CD8-positive, alpha-beta T cell (primary cell): ENCODE measurements at regions of chr6 and their contacts with region 1.

Region 1: DNA sequence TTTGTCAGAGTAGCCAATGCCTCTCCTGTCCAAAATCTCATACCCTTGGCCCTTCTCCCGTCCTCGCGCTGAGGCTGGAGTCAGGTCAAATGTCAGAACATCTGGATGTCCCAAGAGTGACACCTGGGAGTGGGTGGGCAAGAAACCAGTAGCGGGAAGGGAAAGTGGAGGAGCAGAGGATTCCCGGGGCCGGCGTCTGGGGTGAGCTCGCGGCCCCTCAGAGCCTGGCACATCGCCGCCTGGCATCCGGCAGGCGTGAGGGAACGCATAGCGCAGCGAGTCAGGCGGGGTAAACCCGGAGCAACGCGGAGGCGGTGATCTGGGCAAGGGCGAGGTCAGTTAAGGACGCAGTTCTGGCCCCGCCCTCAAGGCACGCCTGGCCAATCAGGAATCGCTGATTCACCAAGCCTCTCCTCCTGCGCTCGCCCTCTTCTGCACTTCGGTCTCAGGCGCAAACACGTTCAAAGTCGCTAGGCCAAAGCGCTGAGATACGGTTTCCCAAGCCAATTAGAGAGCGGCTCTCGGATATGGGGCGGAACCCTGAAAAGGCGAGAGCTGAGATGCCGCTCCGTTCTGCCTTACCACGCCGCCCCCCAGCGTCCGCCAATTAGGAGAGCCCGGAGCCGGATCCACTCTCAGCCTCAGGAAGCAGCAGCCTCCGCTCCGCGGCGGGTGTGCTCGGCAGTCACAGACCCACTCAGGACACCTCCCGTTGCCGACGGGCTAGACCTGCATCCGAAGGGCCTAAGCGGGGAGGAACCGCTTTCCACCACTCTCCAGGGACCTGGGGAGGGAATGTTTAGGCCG is 22.5 kb downstream of the VPS52 start:
- DNase-seq: peak; percentile 90 to 100 (median 95)
- ATAC-seq: peak; percentile 85
- H3K4me3 ChIP-seq: peak overlapping the region; percentile 66 to 71
- H3K4me3 Mint-ChIP-seq: peak overlapping the region; percentile 91
- H3K27ac ChIP-seq: peak overlapping the region; percentile 85 to 98
- H3K27ac Mint-ChIP-seq: peak overlapping the region; percentile 93
- H3K4me1 ChIP-seq: peaks cover 25% of the 10 kb centered on the region
- H3K4me1 Mint-ChIP-seq: peaks cover 38% of the 10 kb centered on the region
- H3K27me3 ChIP-seq: peaks cover 0 to 3% of the 10 kb centered on the region in 2 experiments
- H3K27me3 Mint-ChIP-seq: no peaks in the 10 kb centered on the region
- CTCF ChIP-seq: no peak

Region 2: DNA sequence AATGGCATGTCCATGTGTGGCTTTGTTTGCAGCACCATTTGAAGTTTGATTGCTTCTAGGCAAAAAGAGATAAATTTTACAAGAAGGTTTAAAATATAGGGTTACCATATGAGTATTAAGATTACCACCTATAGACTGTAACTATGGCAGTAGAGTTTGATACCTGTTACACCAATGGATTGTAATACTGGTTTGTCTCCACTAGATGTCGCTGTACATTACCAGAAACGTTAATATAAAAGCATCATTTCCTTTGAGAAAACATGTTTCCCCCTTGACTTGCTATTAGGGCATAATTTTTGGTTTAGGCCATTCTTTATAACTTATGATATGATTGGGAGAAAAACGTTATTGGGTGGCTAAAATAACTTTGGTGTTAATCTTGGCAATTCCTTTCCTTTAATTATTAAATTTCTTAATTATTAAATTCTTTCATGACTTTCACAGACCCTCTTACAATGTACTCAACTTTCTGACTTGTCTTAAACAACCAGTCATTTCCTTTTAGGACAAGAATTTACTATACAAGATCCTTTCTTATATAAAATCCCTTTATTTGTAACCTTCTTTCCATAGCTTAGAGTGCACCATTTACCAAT is 130.5 kb before region 1 on chr6:
- CTCF ChIA-PET with region 1: interaction called, 59 read pairs
- POLR2A ChIA-PET with region 1: interaction called, 11 read pairs
- intact Hi-C with region 1: loop called (anchors 1 kb)
- DNase-seq: peak in 3 of 9 experiments; percentile 30 to 83 (median 76)
- ATAC-seq: peak; percentile 84
- H3K4me3 ChIP-seq: no peak overlapping the region
- H3K4me3 Mint-ChIP-seq: no peak overlapping the region
- H3K27ac ChIP-seq: no peak overlapping the region
- H3K27ac Mint-ChIP-seq: no peak overlapping the region
- H3K4me1 ChIP-seq: no peaks in the 10 kb centered on the region
- H3K4me1 Mint-ChIP-seq: peaks cover 18% of the 10 kb centered on the region
- H3K27me3 ChIP-seq: peaks cover 20 to 22% of the 10 kb centered on the region in 2 experiments
- H3K27me3 Mint-ChIP-seq: peaks cover 46% of the 10 kb centered on the region
- CTCF ChIP-seq: peak; percentile 65

Region 3: DNA sequence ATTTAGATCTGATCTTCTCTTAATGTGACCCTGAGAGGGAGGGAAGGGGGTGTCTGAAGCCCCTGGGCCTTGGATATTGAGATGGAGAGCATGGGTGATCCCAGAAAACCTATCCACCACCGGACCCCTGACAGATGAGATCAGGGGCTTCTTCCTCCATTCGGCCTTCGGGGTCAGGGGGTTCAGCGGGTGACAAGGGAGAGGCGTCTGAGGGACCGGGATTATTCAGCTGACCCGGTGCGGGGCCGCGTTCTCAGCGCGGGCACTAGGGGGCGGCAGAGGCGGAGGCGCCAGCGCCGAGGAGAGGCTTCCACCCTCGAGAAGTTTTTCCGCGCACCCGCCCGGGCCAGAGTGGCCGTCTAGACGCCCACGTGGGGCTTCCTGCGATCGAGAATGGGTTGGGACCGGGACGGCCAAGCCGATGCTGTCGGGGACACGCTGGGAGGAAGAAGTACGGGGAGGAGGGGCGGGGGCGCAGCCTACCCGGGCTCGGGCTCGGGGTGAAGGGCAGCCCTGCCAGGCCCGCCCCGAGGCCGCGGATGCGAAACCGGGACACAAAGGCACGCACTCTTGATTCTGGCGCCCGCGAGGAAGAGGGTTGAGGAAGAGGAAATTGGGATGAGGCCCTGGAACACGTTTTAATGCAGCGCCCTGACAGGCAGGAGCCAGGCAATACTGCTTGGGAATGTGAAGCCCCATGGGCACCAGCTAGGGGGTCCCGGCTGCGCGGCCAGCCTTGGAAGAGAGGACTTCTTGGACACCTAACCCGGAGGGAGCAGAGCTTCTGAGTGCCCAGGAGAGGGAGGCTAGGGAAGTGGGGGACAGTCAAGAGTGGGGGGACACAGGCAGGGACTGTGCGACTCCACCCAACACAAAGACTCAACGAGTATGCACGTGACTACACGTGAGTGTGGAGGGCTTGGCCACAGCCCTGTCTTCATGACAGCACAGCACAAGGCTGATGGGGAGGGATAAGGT is 87.5 kb before region 1 on chr6:
- CTCF ChIA-PET with region 1: interaction called, 133 read pairs
- POLR2A ChIA-PET with region 1: interaction called, 10 read pairs
- intact Hi-C with region 1: loop called (anchors 1 kb)
- DNase-seq: peak; percentile 74 to 91 (median 85)
- ATAC-seq: peak; percentile 97
- H3K4me3 ChIP-seq: peak overlapping the region; percentile 50
- H3K4me3 Mint-ChIP-seq: peak overlapping the region; percentile 86
- H3K27ac ChIP-seq: no peak overlapping the region
- H3K27ac Mint-ChIP-seq: no peak overlapping the region
- H3K4me1 ChIP-seq: peaks cover 8% of the 10 kb centered on the region
- H3K4me1 Mint-ChIP-seq: peaks cover 14% of the 10 kb centered on the region
- H3K27me3 ChIP-seq: no peaks in the 10 kb centered on the region
- H3K27me3 Mint-ChIP-seq: peaks cover 4% of the 10 kb centered on the region
- CTCF ChIP-seq: peak; percentile 92

Region 4: GRCh38 chr6:33235221-33235634 is 13.9 kb before region 1 on chr6:
- CTCF ChIA-PET with region 1: interaction called, 16 read pairs
- POLR2A ChIA-PET with region 1: no interaction called
- intact Hi-C with region 1: no loop called
- DNase-seq: no peak
- ATAC-seq: no peak
- H3K4me3 ChIP-seq: no peak overlapping the region
- H3K4me3 Mint-ChIP-seq: no peak overlapping the region
- H3K27ac ChIP-seq: no peak overlapping the region
- H3K27ac Mint-ChIP-seq: no peak overlapping the region
- H3K4me1 ChIP-seq: no peaks in the 10 kb centered on the region
- H3K4me1 Mint-ChIP-seq: no peaks in the 10 kb centered on the region
- H3K27me3 ChIP-seq: peaks cover 0 to 5% of the 10 kb centered on the region in 2 experiments
- H3K27me3 Mint-ChIP-seq: peaks cover 15% of the 10 kb centered on the region
- CTCF ChIP-seq: no peak

Region 5: GRCh38 chr6:33276864-33277662 is 27.9 kb after region 1 on chr6 and contains the start of gene B3GALT4:
- CTCF ChIA-PET with region 1: interaction called, 29 read pairs
- POLR2A ChIA-PET with region 1: interaction called, 23 read pairs
- intact Hi-C with region 1: no loop called
- DNase-seq: peak; percentile 28 to 88 (median 68)
- ATAC-seq: peak; percentile 67
- H3K4me3 ChIP-seq: peak within 1 kb of the TSS; percentile 93 to 95
- H3K4me3 Mint-ChIP-seq: peak within 1 kb of the TSS; percentile 89
- H3K27ac ChIP-seq: peak within 1 kb of the TSS; percentile 79 to 95
- H3K27ac Mint-ChIP-seq: peak within 1 kb of the TSS; percentile 92
- H3K4me1 ChIP-seq: peaks cover 61% of the 10 kb centered on the region
- H3K4me1 Mint-ChIP-seq: peaks cover 71% of the 10 kb centered on the region
- H3K27me3 ChIP-seq: no peaks in the 10 kb centered on the region
- H3K27me3 Mint-ChIP-seq: no peaks in the 10 kb centered on the region
- CTCF ChIP-seq: peak; percentile 55
- total RNA-seq, gene B3GALT4: 7.9 to 8.8 TPM

Region 6: DNA sequence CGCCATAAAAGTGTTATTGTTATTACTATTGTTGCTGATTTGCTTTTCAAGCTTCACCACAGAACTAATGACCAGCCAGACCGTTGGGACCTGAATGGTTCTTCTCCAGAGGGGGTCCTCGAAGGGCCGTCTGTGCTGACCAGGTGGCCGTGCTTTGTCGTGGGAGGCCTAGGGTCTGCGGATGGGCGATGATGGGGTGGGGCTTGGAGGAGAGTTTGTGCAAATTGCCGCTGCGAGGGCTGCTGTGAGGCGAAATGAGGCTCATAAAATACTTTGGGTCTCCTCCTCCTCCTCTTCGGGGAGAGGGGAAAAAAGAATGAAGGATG is 74.5 kb after region 1 on chr6:
- CTCF ChIA-PET with region 1: no interaction called
- POLR2A ChIA-PET with region 1: interaction called, 5 read pairs
- intact Hi-C with region 1: loop called in 1 of 2 experiments (anchors 1 kb)
- DNase-seq: peak in 1 of 9 experiments; percentile 29
- ATAC-seq: no peak
- H3K4me3 ChIP-seq: peak overlapping the region; percentile 85 to 93
- H3K4me3 Mint-ChIP-seq: peak overlapping the region; percentile 96
- H3K27ac ChIP-seq: peak overlapping the region; percentile 83 to 91
- H3K27ac Mint-ChIP-seq: peak overlapping the region; percentile 94
- H3K4me1 ChIP-seq: peaks cover 43% of the 10 kb centered on the region
- H3K4me1 Mint-ChIP-seq: peaks cover 53% of the 10 kb centered on the region
- H3K27me3 ChIP-seq: no peaks in the 10 kb centered on the region
- H3K27me3 Mint-ChIP-seq: no peaks in the 10 kb centered on the region
- CTCF ChIP-seq: no peak